Ovary (tissue), 10 donors: ENCODE measurements at regions of chr17 and their contacts with region 1.

Region 1: GRCh38 chr17:44338702-44339101 is 6.4 kb upstream of the GRN start:
- DNase-seq: no peak
- H3K4me3 ChIP-seq: no peak overlapping the region
- H3K27ac ChIP-seq: no peak overlapping the region
- H3K4me1 ChIP-seq: no peaks in the 10 kb centered on the region
- H3K27me3 ChIP-seq: no peaks in the 10 kb centered on the region
- CTCF ChIP-seq: no peak
- EP300 ChIP-seq: no peak
- POLR2A ChIP-seq: no peak

Region 2: DNA sequence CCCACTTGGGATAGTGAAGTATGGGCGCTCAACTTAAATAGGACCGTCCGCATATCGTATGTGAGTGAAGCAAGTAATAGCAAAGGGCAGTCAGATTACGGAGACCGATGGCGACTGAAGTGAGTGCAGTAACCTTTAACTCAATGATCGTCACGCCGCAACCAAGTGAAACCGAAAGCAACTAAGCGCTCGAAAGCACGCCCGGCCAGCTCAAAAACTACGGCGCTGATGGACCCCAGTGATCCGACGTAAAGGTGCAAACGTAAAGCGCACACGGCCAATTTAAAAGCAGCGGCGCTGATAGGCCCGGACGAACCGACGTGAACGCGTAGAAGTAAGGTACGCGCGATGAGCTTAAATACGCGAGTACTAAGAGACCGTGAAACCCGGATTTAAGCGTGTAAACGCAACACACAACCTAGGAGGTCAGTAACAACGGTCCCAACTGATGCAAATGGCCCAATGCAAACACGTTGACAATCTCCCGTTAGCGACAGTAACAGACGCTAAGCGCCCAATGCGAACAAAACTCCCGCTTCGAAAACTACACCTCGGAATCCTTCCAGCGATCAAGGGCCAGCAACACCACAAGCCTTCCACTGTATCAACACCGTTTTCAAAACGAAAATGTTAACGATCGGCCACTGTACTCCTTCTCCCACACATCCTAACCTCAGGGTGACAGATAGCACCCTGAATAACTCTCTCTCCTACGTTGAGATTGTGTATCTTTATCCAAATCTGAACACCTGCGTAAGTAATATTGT is 977.8 kb before region 1 on chr17:
- intact Hi-C with region 1: no loop called
- DNase-seq: peak in 4 of 5 donors; percentile 86 to 94 (median 90)
- H3K4me3 ChIP-seq: peak overlapping the region; percentile 56
- H3K27ac ChIP-seq: peak overlapping the region; percentile 67 to 95
- H3K4me1 ChIP-seq: peaks cover 5% of the 10 kb centered on the region
- H3K27me3 ChIP-seq: no peaks in the 10 kb centered on the region
- CTCF ChIP-seq: peak in 1 of 3 donors; percentile 12
- EP300 ChIP-seq: no peak
- POLR2A ChIP-seq: peak; percentile 100

Region 3: DNA sequence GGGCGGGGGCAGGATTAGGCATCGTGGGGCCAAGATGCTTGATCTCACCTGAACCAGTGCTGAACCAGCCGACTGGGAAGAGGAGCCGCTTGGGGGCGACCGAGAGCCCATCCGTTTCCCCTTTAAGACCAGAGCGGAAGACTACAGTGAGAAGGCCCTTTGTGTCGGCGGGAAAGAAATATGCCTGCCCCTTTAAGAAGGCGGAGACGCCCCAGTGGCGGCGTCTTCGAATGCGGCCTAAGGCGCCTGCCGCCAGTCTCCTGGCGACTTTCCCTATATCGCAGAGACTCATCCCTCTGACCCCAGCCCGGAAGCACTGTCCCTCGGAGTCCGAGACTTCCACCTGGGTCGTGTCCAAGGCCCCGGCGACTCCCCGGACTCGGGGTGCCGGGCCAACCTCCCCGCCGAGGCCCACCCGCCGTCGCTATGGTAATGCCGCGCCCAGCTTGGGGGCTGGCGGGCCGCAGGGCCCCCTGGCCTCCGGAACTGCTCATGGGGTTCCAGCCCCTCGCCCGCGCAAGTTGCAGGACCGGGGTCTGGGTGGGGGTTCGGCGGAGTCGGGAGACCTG is 196.9 kb before region 1 on chr17 and contains the start of gene HROB:
- intact Hi-C with region 1: loop called in 1 of 4 experiments (anchors 5 kb)
- DNase-seq: peak; percentile 93 to 98 (median 97)
- H3K4me3 ChIP-seq: peak within 1 kb of the TSS; percentile 63
- H3K27ac ChIP-seq: no peak within 1 kb of the TSS
- H3K4me1 ChIP-seq: no peaks in the 10 kb centered on the region
- H3K27me3 ChIP-seq: no peaks in the 10 kb centered on the region
- CTCF ChIP-seq: peak; percentile 87 to 95 (median 89)
- EP300 ChIP-seq: no peak
- POLR2A ChIP-seq: no peak
- total RNA-seq, gene HROB: 0.86 to 6.3 (median 0.97) TPM

Region 4: DNA sequence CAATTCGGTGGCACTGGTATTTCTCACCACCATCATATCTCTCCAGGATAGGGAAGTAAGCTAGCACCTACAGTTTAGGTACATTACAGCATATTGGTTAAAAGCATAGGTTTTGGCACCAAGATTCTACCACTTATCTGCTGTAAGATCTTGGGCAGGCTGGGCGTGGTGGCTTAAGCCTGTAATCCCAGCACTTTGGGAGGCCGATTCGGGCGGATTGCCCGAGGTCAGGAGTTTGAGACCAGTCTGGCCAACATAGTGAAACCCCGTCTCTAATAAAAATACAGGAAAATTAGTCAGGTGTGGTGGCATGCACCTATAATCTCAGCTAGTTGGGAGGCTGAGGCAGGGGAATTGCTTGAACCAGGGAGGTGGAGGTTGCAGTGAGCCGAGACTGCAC is 113.1 kb after region 1 on chr17:
- intact Hi-C with region 1: no loop called
- DNase-seq: no peak
- H3K4me3 ChIP-seq: no peak overlapping the region
- H3K27ac ChIP-seq: no peak overlapping the region
- H3K4me1 ChIP-seq: no peaks in the 10 kb centered on the region
- H3K27me3 ChIP-seq: no peaks in the 10 kb centered on the region
- CTCF ChIP-seq: no peak
- EP300 ChIP-seq: no peak
- POLR2A ChIP-seq: no peak